A549 (cell line): ENCODE measurements at regions of chr1 and their contacts with region 1.

Region 1: GRCh38 chr1:161225534-161226319 is at the start of gene TOMM40L:
- DNase-seq: peak; percentile 97 to 99
- ATAC-seq: peak; percentile 93 to 98
- H3K4me3 ChIP-seq: peak within 1 kb of the TSS; percentile 57
- H3K27ac ChIP-seq: peak within 1 kb of the TSS; percentile 72 to 85
- H3K4me1 ChIP-seq: peaks cover 13% of the 10 kb centered on the region
- CTCF ChIP-seq: peak; percentile 49
- EP300 ChIP-seq: no peak
- POLR2A ChIP-seq: peak; percentile 43; the same call in 1 of the 2 replicates
- RAD21 ChIP-seq: peak in 1 of 2 experiments; percentile 40; a peak in 3 of 5 replicates
- polyA plus RNA-seq, gene TOMM40L: 6.3 and 7.0 TPM in 2 replicates

Region 2: DNA sequence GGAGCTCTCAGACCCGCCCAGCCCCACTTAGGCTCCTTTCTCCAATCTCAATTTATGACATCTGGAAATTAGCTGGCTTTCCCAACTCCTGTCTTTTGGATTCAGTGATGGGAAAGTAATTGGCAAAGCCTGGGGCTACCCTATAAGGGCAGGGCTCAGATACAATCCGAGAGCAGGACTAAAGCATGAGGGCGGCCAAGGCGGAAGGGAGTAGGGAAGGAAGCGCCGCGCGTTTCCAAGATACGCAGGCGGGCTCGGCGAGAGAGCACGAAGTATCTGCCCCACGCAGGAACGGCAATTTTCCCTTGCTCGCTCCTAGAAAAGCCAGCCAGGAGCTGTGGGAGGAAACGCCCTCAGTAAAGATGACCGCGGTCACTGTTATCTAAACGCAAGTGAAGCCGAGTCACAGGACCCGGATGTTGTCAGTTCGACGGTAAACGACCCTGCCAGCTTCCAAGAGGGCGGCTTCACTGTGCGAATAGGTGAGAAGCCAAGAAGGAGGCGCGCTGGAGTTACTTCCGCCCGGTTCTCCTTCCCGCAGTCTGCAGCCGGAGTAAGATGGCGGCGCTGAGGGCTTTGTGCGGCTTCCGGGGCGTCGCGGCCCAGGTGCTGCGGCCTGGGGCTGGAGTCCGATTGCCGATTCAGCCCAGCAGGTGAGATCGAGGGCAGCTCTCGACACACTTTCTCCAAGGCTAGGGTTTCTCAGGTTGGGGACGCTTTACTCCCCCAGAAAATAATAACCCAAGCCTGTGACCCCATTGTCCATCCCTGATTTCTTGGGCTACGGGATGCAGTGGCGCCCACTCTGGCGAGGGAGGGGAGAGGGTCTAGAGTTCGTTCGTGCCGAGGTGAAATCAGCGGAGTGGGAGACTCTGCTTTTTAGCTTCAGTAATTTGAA is 23.6 kb before region 1 on chr1 and contains the start of gene NDUFS2:
- CTCF ChIA-PET with region 1: interaction called, 319 read pairs
- POLR2A ChIA-PET with region 1: interaction called, 23 read pairs
- DNase-seq: peak; percentile 94 to 99
- ATAC-seq: peak; percentile 95 to 98
- H3K4me3 ChIP-seq: peak within 1 kb of the TSS; percentile 84
- H3K27ac ChIP-seq: peak within 1 kb of the TSS; percentile 93
- H3K4me1 ChIP-seq: peaks cover 29% of the 10 kb centered on the region
- CTCF ChIP-seq: peak; percentile 34
- EP300 ChIP-seq: no peak
- POLR2A ChIP-seq: peak; percentile 84
- RAD21 ChIP-seq: no peak
- polyA plus RNA-seq, gene NDUFS2: 125 and 144 TPM in 2 replicates

Region 3: GRCh38 chr1:161238039-161238473 is 12.3 kb after region 1 on chr1 and contains the start of gene NR1I3:
- CTCF ChIA-PET with region 1: interaction called, 66 read pairs
- POLR2A ChIA-PET with region 1: no interaction called
- DNase-seq: no peak
- ATAC-seq: no peak
- H3K4me3 ChIP-seq: no peak within 1 kb of the TSS
- H3K27ac ChIP-seq: no peak within 1 kb of the TSS
- H3K4me1 ChIP-seq: no peaks in the 10 kb centered on the region
- CTCF ChIP-seq: no peak
- EP300 ChIP-seq: no peak
- POLR2A ChIP-seq: no peak
- RAD21 ChIP-seq: no peak
- polyA plus RNA-seq, gene NR1I3: not detected in 2 replicates

Region 4: DNA sequence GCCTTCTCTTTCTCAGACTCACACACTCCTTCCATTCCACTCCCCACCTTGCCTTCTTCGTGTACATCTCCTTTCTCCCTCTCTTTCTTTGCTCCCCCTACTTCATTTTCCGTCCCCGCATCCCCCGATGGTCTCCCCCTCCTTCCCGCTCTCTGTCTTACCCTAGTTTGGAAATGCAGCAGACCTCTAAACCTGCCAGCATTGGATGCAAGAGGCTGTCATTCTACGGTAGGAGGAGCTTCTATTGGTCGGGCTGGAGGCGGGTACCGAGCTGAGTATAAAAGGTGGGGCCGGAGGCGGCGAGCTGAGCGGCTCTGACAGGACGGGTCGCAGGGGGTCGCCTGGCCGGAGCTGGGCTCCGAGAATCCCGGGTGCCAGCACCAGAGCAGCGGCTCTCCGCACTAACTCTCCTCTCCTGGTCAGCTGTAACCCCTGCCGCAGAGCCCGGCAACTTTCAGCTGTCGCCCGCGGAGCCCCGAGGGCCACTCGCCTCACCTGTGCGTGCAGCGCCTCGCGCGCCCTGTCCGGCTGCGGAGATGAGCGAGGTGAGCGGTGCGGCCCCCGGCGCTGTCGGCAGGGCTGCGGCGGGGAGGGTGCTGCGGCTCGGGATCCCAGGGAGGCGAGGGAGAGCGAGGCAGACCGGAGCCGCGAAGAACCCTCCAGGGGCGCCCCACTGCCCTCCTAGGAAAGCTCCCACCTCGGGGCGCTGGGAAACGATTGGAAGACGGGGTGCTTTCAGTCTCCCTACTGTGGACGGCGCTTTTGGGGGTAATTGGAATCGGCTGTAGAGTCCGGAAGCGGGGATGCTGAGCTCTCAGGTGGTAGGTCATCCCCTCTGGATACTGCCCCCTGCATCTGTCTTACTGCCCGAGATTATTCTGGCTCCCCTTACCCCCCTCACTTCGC is 33.0 kb after region 1 on chr1 and contains the start of gene PCP4L1:
- CTCF ChIA-PET with region 1: interaction called, 46 read pairs
- POLR2A ChIA-PET with region 1: no interaction called
- DNase-seq: peak; percentile 59 to 73
- ATAC-seq: peak; percentile 81 to 94
- H3K4me3 ChIP-seq: peak within 1 kb of the TSS; percentile 42
- H3K27ac ChIP-seq: peak within 1 kb of the TSS in 1 of 2 experiments; percentile 49; a peak in 2 of 6 replicates
- H3K4me1 ChIP-seq: peaks cover 6% of the 10 kb centered on the region; the same call in 1 of the 3 replicates
- CTCF ChIP-seq: no peak
- EP300 ChIP-seq: no peak
- POLR2A ChIP-seq: no peak
- RAD21 ChIP-seq: no peak
- polyA plus RNA-seq, gene PCP4L1: not detected in 2 replicates

Region 5: DNA sequence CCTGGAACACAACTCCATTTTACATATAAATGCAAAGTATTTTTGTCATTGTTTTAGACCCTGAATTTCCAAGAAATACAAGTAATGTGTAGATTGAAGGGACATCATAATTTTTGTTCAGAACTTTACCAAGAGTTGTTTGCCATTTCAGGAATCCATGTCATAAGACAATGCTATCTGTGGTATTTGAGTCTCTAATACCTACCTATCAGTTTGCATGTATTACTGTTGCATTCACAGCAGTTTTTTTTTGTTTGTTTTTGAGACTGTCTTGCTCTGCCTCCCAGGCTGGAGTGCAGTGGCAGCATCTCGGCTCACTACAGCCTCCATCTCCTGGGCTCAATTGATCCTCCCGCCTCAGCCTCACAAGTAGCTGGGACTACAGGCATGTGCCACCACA is 66.9 kb after region 1 on chr1:
- CTCF ChIA-PET with region 1: interaction called, 87 read pairs
- POLR2A ChIA-PET with region 1: no interaction called
- DNase-seq: no peak
- ATAC-seq: no peak
- H3K4me3 ChIP-seq: no peak overlapping the region
- H3K27ac ChIP-seq: no peak overlapping the region
- H3K4me1 ChIP-seq: no peaks in the 10 kb centered on the region
- CTCF ChIP-seq: no peak
- EP300 ChIP-seq: no peak
- POLR2A ChIP-seq: no peak
- RAD21 ChIP-seq: no peak

Region 6: DNA sequence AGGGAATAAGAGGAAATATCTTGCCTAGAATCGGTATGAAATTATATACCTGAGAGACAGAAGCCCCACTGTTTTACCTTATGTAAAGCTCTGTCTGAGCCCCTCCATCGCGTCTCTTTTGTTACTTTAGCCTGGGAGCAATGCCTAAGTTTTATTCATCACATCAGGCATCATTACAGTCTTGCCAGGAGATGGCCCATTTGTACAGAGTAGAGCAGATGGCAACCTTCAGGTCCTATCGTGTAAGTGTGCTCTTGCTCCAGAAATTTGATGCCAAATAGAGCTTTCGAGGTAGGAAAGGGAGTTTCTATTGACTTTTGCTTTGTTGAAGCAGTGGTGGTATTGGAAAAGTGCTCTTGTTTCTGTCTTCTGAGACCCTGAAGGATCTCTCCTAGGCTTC is 117.1 kb after region 1 on chr1:
- CTCF ChIA-PET with region 1: interaction called, 16 read pairs
- POLR2A ChIA-PET with region 1: no interaction called
- DNase-seq: no peak
- ATAC-seq: no peak
- H3K4me3 ChIP-seq: no peak overlapping the region
- H3K27ac ChIP-seq: no peak overlapping the region
- H3K4me1 ChIP-seq: no peaks in the 10 kb centered on the region
- CTCF ChIP-seq: no peak
- EP300 ChIP-seq: no peak
- POLR2A ChIP-seq: no peak
- RAD21 ChIP-seq: no peak

Region 7: DNA sequence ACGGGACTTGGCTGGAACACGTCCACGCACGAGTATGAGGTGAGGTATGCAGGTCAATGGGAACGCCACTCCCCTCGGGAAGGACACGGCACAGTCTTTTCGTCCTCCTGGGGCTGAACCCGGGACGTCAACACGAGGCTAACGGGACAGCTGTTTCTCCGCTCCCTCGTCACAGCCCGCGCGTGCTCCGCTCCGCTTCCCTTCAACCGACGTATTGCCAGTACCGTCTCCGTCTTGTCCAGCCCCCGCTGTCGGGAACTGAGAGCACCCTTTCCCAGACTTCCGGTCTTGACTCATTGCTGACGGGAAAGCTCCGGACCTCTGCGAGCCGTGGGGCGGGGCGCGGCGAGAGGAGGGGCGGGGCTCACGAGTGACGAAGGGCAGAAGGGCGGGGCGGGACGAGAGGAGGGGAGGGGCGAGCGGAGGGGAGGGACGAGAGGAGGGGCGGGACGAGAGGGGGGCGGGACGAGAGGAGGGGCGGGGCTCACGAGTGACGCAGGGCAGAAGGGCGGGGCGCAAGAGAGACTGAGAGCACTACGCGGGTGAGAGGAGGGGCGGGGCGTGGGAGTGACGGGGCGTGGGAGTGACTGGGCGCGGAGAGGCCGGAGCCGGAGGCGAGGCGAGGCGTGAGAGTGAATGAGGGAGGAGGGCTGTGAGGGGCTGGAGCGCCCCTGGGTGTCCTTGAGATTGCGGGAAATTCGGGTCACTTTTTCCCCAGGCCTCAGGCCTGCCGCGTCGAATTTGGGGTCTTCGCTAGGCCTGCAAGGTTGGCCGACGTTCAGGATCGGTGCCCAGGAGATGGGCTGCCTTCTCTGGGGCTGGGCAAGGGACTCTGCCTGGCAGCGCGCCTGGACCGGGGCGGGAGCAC is 164.2 kb after region 1 on chr1:
- CTCF ChIA-PET with region 1: interaction called, 268 read pairs
- POLR2A ChIA-PET with region 1: interaction called, 16 read pairs
- DNase-seq: peak; percentile 93 to 98
- ATAC-seq: peak; percentile 97
- H3K4me3 ChIP-seq: peak overlapping the region; percentile 72
- H3K27ac ChIP-seq: peak overlapping the region; percentile 95 to 98
- H3K4me1 ChIP-seq: peaks cover 8% of the 10 kb centered on the region; the same call in 1 of the 3 replicates
- CTCF ChIP-seq: no peak
- EP300 ChIP-seq: no peak
- POLR2A ChIP-seq: peak; percentile 97
- RAD21 ChIP-seq: no peak